ENCODE measurements at regions of chr20 and their contacts with region 1.

Region 1: GRCh38 chr20:13119583-13119982 is 101.5 kb upstream of the ISM1 start:
- DNase-seq: peak; percentile 5
- H3K4me3 ChIP-seq: no peak overlapping the region
- CTCF ChIP-seq: peak; percentile 84

Region 2: DNA sequence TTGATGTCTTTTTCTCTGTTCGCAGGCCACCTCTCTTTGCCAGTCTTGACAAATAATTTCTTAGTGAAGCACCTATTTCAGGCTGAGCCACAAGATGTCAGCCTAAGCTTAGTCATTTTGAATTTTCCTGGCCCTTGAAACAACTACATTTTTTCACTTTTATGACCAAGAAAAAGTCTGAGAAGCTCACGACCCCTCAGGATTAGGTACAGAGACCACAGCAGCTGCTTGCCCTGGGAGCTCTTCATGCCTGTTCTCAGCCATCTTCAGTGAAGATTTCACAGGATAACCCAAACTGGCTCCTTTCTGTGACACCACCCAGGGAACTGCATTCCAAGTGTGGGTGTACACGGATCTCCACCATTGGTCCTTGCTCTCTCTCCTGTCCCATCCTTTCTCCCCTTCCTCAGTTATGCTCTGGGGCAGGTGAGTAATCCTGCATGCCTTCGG is 149.2 kb before region 1 on chr20:
- CTCF ChIA-PET with region 1: interaction called, 31 read pairs
- POLR2A ChIA-PET with region 1: no interaction called
- DNase-seq: no peak
- H3K4me3 ChIP-seq: no peak overlapping the region
- CTCF ChIP-seq: peak; percentile 54

Region 3: GRCh38 chr20:13131688-13132087 is 12.1 kb after region 1 on chr20:
- CTCF ChIA-PET with region 1: interaction called, 14 read pairs
- POLR2A ChIA-PET with region 1: no interaction called
- DNase-seq: no peak
- H3K4me3 ChIP-seq: no peak overlapping the region
- CTCF ChIP-seq: no peak

Region 4: GRCh38 chr20:13261460-13262301 is 142.1 kb after region 1 on chr20:
- CTCF ChIA-PET with region 1: interaction called, 15 read pairs
- POLR2A ChIA-PET with region 1: no interaction called
- DNase-seq: no peak
- H3K4me3 ChIP-seq: no peak overlapping the region
- CTCF ChIP-seq: peak; percentile 84

Region 5: DNA sequence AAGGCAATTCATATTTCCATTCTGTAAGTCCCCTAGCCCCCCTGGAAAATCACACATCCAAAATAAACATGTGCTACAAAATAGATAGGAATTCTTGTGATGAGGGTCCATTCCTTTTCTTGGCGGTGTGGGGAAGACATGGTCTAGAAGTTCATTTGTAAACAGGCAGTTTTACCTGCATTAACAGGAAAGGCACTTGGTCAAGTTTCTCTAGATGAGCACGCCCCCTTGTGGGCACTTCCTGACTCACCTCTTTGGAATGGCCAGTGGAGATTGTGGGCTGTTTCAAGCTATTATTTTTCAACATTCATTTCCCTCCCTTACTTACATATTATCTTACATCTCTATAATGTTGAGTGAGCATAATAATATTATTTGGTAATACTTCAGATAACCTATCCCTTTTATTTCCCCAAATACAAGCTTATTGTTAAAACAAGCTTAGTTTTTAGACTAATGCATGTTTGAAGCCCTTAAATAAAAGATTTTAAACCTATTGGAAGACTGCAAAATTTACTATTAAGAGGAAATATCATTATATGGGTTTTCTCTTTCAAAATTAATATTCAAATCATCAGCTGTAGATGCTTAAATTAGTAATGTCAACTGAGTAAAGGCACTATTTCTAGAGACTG is 427.0 kb after region 1 on chr20:
- CTCF ChIA-PET with region 1: interaction called, 105 read pairs
- POLR2A ChIA-PET with region 1: no interaction called
- DNase-seq: no peak
- H3K4me3 ChIP-seq: no peak overlapping the region
- CTCF ChIP-seq: peak; percentile 75

Region 6: DNA sequence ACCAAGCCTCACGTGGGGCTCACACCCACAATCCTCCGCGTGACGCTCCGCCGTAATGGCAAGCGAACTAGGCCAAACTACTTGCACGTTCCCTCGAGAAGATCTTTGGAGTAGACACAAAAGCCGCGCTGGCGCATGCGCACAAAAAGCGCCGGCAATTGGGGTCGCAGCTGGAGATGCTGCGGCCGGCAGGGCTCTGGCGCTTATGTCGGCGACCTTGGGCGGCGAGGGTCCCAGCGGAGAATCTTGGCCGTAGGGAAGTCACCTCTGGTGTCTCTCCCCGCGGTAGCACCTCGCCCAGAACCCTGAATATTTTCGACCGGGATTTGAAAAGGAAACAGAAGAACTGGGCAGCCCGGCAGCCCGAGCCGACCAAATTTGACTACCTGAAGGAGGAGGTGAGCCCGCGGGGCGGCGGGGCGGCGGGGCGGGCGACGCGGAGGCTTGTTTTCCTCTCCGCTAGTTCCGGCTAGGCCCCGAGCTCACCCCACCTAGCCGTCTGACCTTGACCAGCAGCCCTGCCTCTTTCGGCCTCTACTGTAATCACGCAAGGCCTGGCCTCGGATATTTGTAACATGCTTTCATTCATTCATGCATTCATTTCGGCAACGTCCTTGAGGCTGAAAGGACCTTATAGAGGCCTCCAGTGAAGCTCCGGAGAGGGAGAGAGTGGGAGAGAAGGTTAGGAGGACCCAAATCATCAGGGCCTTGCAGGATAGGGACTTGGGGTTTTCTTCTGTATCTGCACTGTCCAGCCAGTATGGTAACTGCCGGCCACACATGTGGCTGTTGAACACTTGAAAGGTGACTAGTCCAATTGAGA is 665.5 kb after region 1 on chr20 and contains the starts of genes ESF1 and NDUFAF5:
- CTCF ChIA-PET with region 1: interaction called, 15 read pairs
- POLR2A ChIA-PET with region 1: no interaction called
- DNase-seq: peak; percentile 81
- H3K4me3 ChIP-seq: peak within 1 kb of the TSS; percentile 90
- CTCF ChIP-seq: no peak